ENCODE measurements at regions of chr2 and their contacts with region 1.

Region 1: DNA sequence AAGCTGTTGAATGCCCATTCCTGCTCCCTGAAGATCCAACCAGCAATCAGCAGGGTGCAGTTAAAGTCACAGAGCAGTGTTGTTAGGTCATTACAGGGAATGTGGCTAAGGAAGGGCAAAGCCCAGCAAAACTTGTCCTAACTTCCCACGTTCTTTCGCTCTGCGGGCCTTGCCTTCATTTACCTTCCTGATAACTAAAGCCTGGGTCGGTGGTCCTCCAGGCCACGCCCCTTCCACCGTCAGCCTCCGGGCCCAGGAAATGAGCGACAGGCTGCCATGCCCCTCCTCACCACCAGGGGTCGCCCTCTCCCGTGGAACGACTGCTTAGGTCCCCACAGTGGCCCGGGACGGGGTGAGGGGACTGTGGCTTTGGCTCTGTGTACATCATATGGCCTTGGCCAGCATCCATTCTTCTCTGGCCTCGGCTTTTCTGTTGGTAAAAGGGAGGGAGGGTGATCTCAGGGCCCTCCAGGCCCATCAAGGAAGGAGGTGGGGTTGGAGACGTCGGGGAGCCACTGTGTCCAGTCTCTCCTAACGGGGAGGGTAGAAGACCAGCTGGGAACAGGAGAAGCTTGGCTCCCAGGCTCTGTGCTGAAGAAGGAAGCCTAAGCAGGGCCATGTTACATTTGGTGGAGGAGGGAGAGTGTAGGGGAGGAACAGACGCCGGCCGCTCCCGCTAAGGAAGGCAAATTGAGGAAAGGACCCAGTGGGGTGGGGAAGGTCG is 2.2 kb downstream of the SH2D6 start:
- DNase-seq: peak; percentile 86
- H3K27ac ChIP-seq: peak overlapping the region; percentile 92
- CTCF ChIP-seq: peak; percentile 97

Region 2: GRCh38 chr2:85511008-85511811 is 90.5 kb after region 1 on chr2:
- CTCF ChIA-PET with region 1: no interaction called
- POLR2A ChIA-PET with region 1: no interaction called
- DNase-seq: no peak
- H3K27ac ChIP-seq: peak overlapping the region; percentile 52
- CTCF ChIP-seq: no peak

Region 3: GRCh38 chr2:85551698-85552678 is 131.3 kb after region 1 on chr2:
- CTCF ChIA-PET with region 1: interaction called, 40 read pairs
- POLR2A ChIA-PET with region 1: interaction called, 3 read pairs
- DNase-seq: peak; percentile 72
- H3K27ac ChIP-seq: peak overlapping the region; percentile 40
- CTCF ChIP-seq: peak; percentile 88

Measured in RWPE1 (cell line).